Posterior vena cava (tissue), 2 donors: ENCODE measurements at regions of chr17 and their contacts with region 1.

Region 1: DNA sequence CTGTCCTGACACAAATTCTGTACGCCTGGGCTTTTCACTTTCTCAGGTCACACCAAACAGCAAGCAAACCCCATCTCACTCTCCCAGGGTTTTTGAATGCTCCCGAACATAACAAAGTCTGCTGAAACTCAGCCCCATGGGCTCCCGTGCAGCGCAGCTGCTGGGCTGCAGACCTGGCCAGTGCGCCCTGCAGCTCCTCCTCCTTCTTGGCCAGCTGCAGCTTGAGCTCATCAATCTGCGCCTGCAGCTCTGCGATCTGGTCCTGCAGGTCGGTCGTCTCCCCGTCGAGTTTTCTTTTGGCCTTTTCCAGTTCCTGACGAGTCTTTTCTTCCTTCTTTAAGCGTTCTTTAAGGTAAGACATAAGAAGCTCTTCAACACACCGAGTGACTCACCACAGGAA is 70.5 kb downstream of the NDEL1 start:
- DNase-seq: no peak

Region 2: GRCh38 chr17:7972131-7972785 is 533.9 kb before region 1 on chr17:
- intact Hi-C with region 1: no loop called
- DNase-seq: no peak

Region 3: GRCh38 chr17:8484465-8484864 is 21.7 kb before region 1 on chr17:
- intact Hi-C with region 1: loop called in 1 of 2 experiments (anchors 1 kb)
- DNase-seq: no peak